Heart right ventricle (tissue), 16 donors: ENCODE measurements at regions of chr1 and their contacts with region 1.

Region 1: DNA sequence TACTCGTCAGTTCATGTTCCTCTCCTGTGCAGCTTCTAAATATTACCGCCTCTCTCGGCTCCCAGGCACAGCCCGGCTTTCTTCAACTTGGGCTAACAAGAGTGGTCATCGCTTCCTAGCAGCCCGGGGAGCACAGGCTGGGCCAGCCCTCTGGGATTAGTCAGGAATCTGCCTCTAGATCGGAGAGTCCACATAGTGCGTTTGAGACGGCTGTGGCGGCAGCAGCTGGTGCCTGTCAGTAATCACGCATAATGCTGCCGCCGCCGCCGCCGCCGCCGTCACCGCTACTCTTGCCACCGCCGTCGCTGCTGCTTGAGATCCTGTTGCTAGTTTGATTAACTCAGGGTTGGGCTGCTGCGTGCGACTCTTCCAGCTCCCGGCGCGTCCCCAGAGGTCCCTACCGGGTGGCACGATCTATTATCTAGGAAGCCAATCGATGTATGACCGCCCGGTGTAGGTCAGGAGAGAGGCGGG is at the start of gene RXRG:
- DNase-seq: peak; percentile 26 to 64
- ATAC-seq: peak; percentile 53 to 75 (median 66)
- H3K4me3 ChIP-seq: peak within 1 kb of the TSS; percentile 23 to 61 (median 48)
- H3K27ac ChIP-seq: peak within 1 kb of the TSS in 6 of 10 donors; percentile 41 to 73 (median 58)
- H3K4me1 ChIP-seq: peaks cover 0 to 25% (median 14%) of the 10 kb centered on the region in 9 donors
- H3K27me3 ChIP-seq: peaks cover 0 to 61% (median 6%) of the 10 kb centered on the region in 7 donors
- CTCF ChIP-seq: no peak
- total RNA-seq, gene RXRG: 1.8 to 16.3 (median 4.6) TPM

Region 2: GRCh38 chr1:165397944-165398343 is 47.0 kb before region 1 on chr1:
- intact Hi-C with region 1: loop called in 1 of 10 experiments (anchors 5 kb)
- DNase-seq: peak; percentile 20 to 53
- ATAC-seq: peak; percentile 59 to 91 (median 85)
- H3K4me3 ChIP-seq: no peak overlapping the region
- H3K27ac ChIP-seq: peak overlapping the region in 8 of 10 donors; percentile 12 to 58 (median 35)
- H3K4me1 ChIP-seq: peaks cover 0 to 20% (median 11%) of the 10 kb centered on the region in 9 donors
- H3K27me3 ChIP-seq: peaks cover 0 to 83% (median 0%) of the 10 kb centered on the region in 7 donors
- CTCF ChIP-seq: no peak

Region 3: GRCh38 chr1:165409657-165410358 is 35.1 kb before region 1 on chr1:
- intact Hi-C with region 1: loop called in 1 of 10 experiments (anchors 5 kb)
- DNase-seq: peak in 1 of 2 donors; percentile 73
- ATAC-seq: peak; percentile 84 to 96 (median 92)
- H3K4me3 ChIP-seq: no peak overlapping the region
- H3K27ac ChIP-seq: peak overlapping the region in 2 of 10 donors; percentile 16 to 26
- H3K4me1 ChIP-seq: peaks cover 0 to 35% (median 13%) of the 10 kb centered on the region in 9 donors
- H3K27me3 ChIP-seq: peaks cover 0 to 22% (median 0%) of the 10 kb centered on the region in 7 donors
- CTCF ChIP-seq: no peak

Region 4: DNA sequence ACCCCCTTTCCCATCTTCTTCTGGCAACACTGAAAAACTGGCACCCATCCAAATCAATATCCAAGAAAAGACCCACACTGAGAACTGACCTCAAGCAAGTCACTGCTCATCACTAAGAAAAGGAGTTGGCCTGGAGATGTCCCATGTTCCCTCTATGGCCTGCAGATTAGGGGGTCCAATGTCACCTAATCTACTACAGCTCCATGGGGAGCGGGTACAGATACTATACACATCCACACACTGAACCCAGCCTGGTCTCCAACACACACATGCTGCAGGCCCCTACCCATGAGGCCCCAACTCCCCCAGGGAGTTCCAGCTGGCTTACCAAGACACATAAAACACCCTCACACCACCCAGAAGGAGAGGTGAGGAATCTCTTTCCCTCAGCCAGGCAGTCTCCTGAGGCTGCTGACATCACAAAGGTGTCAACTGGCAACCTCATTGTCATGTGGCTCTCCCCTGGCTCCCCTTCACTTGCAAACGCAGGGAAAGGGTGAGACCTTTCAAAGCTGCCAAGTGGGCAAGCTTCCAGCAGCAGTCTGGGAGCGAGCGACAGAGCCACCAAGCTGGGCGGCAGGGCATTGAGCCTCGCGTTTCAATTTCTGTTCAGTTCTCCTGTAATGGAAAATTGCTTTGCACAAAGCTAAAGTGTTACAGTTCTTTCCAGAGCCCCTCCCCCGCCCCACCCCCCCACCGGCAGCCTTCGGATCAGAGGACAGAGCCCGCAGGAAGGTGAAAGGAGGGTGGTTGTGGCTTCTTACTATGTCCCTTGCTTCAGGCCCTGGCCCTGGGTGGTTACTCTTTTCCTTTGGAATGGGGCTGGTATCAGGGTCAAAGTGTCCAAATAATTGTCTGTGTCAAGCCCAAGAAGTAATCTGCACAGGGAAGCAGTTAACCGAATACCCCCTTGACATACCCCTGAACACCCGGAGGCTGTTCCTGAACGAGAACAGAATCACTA is 98.9 kb after region 1 on chr1 and contains the start of gene LRRC52:
- intact Hi-C with region 1: loop called in 1 of 10 experiments (anchors 10 kb)
- DNase-seq: peak; percentile 77 to 86
- ATAC-seq: peak; percentile 76 to 93 (median 90)
- H3K4me3 ChIP-seq: no peak within 1 kb of the TSS
- H3K27ac ChIP-seq: peak within 1 kb of the TSS in 9 of 10 donors; percentile 14 to 78 (median 70)
- H3K4me1 ChIP-seq: peaks cover 6 to 37% (median 13%) of the 10 kb centered on the region in 9 donors
- H3K27me3 ChIP-seq: peaks cover 0 to 27% (median 0%) of the 10 kb centered on the region in 7 donors
- CTCF ChIP-seq: peak in 3 of 9 donors; percentile 49 to 58 (median 49)
- total RNA-seq, gene LRRC52: 0.42 to 1.6 (median 0.57) TPM in 7 of 10 donors, not detected in the others